GM12878 (cell line): ENCODE measurements at regions of chr20 and their contacts with region 1.

Region 1: DNA sequence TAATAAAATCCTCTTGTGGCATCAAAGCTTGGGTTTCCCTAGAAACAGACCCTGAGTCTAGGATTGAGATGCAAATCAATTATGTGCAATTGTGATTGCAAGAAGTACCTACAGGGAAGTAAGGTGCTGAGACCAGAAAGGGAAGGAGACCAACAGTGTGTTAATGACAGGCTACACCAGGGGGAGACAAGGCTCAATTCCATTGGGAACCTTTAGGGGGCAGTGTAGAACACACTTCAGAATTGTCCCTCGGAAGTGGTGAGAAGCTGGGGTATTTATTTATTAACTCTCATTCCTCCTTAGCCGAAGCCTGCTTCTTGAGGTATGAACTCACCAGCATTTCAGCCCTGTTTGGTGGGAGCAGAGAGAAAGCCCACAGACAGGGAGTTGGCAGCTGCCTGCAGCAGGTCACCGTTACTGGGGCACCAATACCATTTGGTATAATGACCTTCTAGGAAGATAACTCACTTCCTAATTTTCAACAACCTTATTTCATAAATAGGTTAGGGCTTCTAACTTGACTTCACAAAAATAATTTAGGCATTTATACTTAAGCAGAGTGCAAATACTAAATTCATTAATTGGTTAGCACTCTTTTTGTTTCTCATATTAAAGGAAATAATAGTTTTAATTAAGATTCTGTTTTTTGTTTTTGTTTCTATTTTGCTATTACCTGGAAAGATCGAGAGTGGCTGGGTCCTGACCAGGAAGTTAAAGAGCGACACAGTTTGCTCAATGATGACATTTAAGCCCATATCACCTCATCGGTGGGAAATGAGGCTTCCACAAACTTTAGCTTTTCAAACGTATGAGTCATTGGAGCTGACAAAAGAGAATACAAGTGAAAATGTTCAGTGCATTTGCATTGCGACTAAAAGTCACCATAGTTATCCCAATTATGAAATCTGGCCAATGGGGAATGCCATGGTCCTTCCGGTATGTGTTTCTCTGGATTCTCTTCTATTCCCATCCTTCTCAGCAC is 94.8 kb downstream of the BTBD3 start:
- DNase-seq: peak; percentile 12
- ATAC-seq: peak; percentile 96
- H3K4me3 ChIP-seq: no peak overlapping the region
- H3K27ac ChIP-seq: no peak overlapping the region
- H3K4me1 ChIP-seq: no peaks in the 10 kb centered on the region
- H3K27me3 ChIP-seq: no peaks in the 10 kb centered on the region
- CTCF ChIP-seq: peak; percentile 79 to 91 (median 89)
- EP300 ChIP-seq: no peak
- POLR2A ChIP-seq: no peak
- RAD21 ChIP-seq: no peak

Region 2: GRCh38 chr20:11993886-11994461 is 18.6 kb before region 1 on chr20:
- CTCF ChIA-PET with region 1: interaction called, 35 read pairs
- POLR2A ChIA-PET with region 1: no interaction called
- RAD21 ChIA-PET with region 1: interaction called, 11 read pairs
- SMC1A ChIA-PET with region 1: interaction called, 9 read pairs
- in situ Hi-C with region 1: no loop called
- intact Hi-C with region 1: no loop called
- DNase-seq: no peak
- ATAC-seq: peak; percentile 45
- H3K4me3 ChIP-seq: no peak overlapping the region
- H3K27ac ChIP-seq: no peak overlapping the region
- H3K4me1 ChIP-seq: no peaks in the 10 kb centered on the region
- H3K27me3 ChIP-seq: no peaks in the 10 kb centered on the region
- CTCF ChIP-seq: no peak
- EP300 ChIP-seq: no peak
- POLR2A ChIP-seq: no peak
- RAD21 ChIP-seq: no peak

Region 3: GRCh38 chr20:12030470-12030869 is 17.9 kb after region 1 on chr20:
- CTCF ChIA-PET with region 1: interaction called, 15 read pairs
- POLR2A ChIA-PET with region 1: interaction called, 3 read pairs
- RAD21 ChIA-PET with region 1: no interaction called
- SMC1A ChIA-PET with region 1: interaction called, 3 read pairs
- in situ Hi-C with region 1: no loop called
- intact Hi-C with region 1: no loop called
- DNase-seq: no peak
- ATAC-seq: no peak
- H3K4me3 ChIP-seq: no peak overlapping the region
- H3K27ac ChIP-seq: no peak overlapping the region
- H3K4me1 ChIP-seq: no peaks in the 10 kb centered on the region
- H3K27me3 ChIP-seq: no peaks in the 10 kb centered on the region
- CTCF ChIP-seq: no peak
- EP300 ChIP-seq: no peak
- POLR2A ChIP-seq: no peak
- RAD21 ChIP-seq: no peak

Region 4: DNA sequence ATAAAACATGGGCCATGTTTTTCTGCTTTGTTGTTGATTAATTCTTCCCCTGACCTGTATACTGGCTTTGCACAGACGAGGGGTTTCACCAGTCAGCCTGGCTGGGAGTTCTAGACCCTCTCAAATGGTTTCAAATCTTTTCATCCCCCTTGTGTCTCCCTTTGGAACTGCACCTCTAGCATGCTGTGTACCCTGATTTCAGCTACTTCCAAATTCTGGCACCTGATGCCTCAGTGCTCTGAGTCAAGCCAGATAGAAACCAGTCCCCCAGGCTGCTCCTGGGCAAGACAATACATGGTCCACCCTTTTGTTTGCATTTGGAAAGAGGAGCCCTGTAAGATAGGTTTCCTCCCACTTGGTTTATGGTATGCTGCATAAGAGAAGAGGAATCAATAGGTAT is 195.3 kb after region 1 on chr20:
- CTCF ChIA-PET with region 1: interaction called, 8 read pairs
- POLR2A ChIA-PET with region 1: no interaction called
- RAD21 ChIA-PET with region 1: interaction called, 5 read pairs
- SMC1A ChIA-PET with region 1: interaction called, 5 read pairs
- in situ Hi-C with region 1: no loop called
- intact Hi-C with region 1: loop called (anchors 5 kb)
- DNase-seq: no peak
- ATAC-seq: peak; percentile 54
- H3K4me3 ChIP-seq: no peak overlapping the region
- H3K27ac ChIP-seq: no peak overlapping the region
- H3K4me1 ChIP-seq: no peaks in the 10 kb centered on the region
- H3K27me3 ChIP-seq: no peaks in the 10 kb centered on the region
- CTCF ChIP-seq: peak; percentile 31 to 41 (median 38); a peak in 3 of 6 replicates
- EP300 ChIP-seq: no peak
- POLR2A ChIP-seq: no peak
- RAD21 ChIP-seq: no peak